Ascending aorta (tissue), 2 donors: ENCODE measurements at regions of chr4 and their contacts with region 1.

Region 1: DNA sequence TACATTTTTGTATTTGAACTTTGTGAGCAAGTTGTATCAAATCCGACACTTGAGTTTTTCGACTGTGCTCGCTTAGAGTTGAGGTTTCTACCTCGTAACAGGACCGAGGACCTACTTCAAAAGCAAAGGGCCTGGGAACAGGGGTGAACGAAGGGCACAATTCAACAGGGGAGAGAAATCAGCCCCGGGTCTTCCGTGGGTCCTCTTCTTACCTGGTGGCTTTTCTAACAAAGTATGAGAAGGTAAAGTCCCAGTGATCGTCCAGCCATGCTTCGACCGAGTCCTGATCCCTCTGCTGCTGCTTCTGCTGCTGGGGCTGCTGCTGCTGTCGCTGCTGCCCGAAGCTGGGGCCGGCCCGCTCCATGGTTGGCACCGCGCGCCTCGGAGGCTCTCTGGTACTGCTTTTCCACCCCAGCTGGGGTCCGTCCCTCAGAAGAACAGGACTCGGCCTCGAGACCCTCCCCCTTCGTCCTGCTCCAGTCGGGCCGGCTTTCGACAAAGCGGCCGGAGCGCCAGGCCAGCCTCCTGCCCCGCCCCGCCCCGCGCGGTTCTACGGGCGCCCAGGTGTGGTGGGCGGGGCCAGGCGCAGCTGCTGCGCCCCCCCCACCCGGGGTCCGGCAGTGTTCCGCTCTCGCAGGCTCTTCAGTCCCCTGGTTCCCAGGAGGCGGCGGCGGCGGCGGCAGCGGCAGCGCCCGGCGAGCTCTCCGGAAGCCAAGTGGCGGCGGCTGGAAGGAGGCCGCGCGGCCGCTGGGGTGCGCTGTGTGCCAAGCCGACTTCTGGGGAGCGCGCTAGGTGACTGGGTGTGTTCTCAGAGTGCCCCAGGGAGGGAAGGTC is at the start of gene PDE5A:
- DNase-seq: peak in 1 of 2 donors; percentile 88
- H3K4me3 ChIP-seq: peak within 1 kb of the TSS; percentile 73 to 86
- H3K27ac ChIP-seq: peak within 1 kb of the TSS; percentile 91 to 97
- H3K4me1 ChIP-seq: peaks cover 0 to 8% of the 10 kb centered on the region in 2 donors
- H3K27me3 ChIP-seq: no peaks in the 10 kb centered on the region
- CTCF ChIP-seq: peak; percentile 70 to 88 (median 81)
- total RNA-seq, gene PDE5A: 39.7 TPM

Region 2: DNA sequence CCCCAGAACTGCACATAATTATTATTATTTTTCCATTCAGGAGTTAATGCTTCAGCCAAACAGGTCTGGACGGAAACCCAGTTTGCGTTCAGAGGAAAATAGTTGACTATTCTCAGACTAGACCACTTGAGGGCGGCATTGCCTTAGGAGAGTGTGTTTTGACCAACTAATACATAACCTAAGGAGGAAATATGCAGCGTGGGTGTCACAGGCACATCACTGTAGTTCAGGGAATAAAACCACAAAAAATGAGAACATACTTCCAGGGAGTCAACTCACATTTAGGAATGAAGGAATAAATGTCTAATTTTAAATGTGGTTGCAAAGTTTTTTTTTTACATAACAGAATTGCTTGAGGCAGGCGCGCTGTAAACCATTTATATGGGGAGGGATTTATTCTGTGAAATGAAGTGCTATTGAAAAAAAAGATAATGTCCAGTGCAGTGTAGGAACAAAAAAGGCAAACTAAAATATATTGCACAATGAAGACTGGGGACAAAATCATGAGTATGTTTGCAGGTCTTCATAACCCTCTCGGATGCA is 646.6 kb before region 1 on chr4:
- intact Hi-C with region 1: loop called (anchors 5 kb)
- DNase-seq: peak in 1 of 2 donors; percentile 89
- H3K4me3 ChIP-seq: no peak overlapping the region
- H3K27ac ChIP-seq: peak overlapping the region; percentile 95 to 96
- H3K4me1 ChIP-seq: peaks cover 30 to 65% of the 10 kb centered on the region in 2 donors
- H3K27me3 ChIP-seq: no peaks in the 10 kb centered on the region
- CTCF ChIP-seq: peak; percentile 68 to 90 (median 82)

Region 3: GRCh38 chr4:119300101-119300978 is 328.2 kb before region 1 on chr4:
- intact Hi-C with region 1: no loop called
- DNase-seq: peak; percentile 77 to 96
- H3K4me3 ChIP-seq: peak overlapping the region; percentile 84 to 88
- H3K27ac ChIP-seq: peak overlapping the region; percentile 92 to 94
- H3K4me1 ChIP-seq: peaks cover 0 to 27% of the 10 kb centered on the region in 2 donors
- H3K27me3 ChIP-seq: no peaks in the 10 kb centered on the region
- CTCF ChIP-seq: no peak

Region 4: GRCh38 chr4:119559044-119559647 is 69.4 kb before region 1 on chr4:
- intact Hi-C with region 1: loop called (anchors 1 kb)
- DNase-seq: no peak
- H3K4me3 ChIP-seq: no peak overlapping the region
- H3K27ac ChIP-seq: peak overlapping the region in 1 of 2 donors; percentile 16
- H3K4me1 ChIP-seq: peaks cover 0 to 4% of the 10 kb centered on the region in 2 donors
- H3K27me3 ChIP-seq: no peaks in the 10 kb centered on the region
- CTCF ChIP-seq: peak; percentile 38 to 58 (median 58)

Region 5: GRCh38 chr4:119692001-119692400 is 63.5 kb after region 1 on chr4:
- intact Hi-C with region 1: loop called (anchors 2 kb)
- DNase-seq: peak in 1 of 2 donors; percentile 74
- H3K4me3 ChIP-seq: no peak overlapping the region
- H3K27ac ChIP-seq: peak overlapping the region in 1 of 2 donors; percentile 54
- H3K4me1 ChIP-seq: peaks cover 0 to 3% of the 10 kb centered on the region in 2 donors
- H3K27me3 ChIP-seq: no peaks in the 10 kb centered on the region
- CTCF ChIP-seq: peak; percentile 46 to 66 (median 48)

Region 6: GRCh38 chr4:119785963-119786362 is 157.4 kb after region 1 on chr4:
- intact Hi-C with region 1: loop called (anchors 2 kb)
- DNase-seq: no peak
- H3K4me3 ChIP-seq: no peak overlapping the region
- H3K27ac ChIP-seq: no peak overlapping the region
- H3K4me1 ChIP-seq: no peaks in the 10 kb centered on the region
- H3K27me3 ChIP-seq: no peaks in the 10 kb centered on the region
- CTCF ChIP-seq: peak in 2 of 3 experiments; percentile 16 to 47

Region 7: DNA sequence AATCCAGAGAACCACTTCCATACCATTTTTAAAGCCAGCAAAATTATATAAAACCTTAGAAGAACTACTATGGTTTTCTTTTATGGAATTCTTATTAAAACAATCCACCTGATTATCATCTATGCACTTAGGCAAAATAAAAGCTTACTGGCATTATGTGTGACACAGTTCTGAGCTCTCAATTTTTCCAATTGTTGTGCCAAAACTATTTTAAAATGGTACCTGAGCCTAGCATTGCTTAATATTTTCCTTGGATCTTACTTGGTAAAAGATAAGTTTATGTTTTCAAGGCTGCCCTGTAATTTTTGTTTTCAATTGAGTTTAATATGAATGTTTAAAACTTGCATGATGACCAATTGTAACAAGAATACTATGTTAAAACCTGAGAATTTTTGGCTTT is 236.9 kb after region 1 on chr4:
- intact Hi-C with region 1: loop called (anchors 2 kb)
- DNase-seq: no peak
- H3K4me3 ChIP-seq: no peak overlapping the region
- H3K27ac ChIP-seq: peak overlapping the region; percentile 74 to 78
- H3K4me1 ChIP-seq: peaks cover 0 to 22% of the 10 kb centered on the region in 2 donors
- H3K27me3 ChIP-seq: no peaks in the 10 kb centered on the region
- CTCF ChIP-seq: no peak